ENCODE measurements at regions of chr1 and their contacts with region 1.

Region 1: DNA sequence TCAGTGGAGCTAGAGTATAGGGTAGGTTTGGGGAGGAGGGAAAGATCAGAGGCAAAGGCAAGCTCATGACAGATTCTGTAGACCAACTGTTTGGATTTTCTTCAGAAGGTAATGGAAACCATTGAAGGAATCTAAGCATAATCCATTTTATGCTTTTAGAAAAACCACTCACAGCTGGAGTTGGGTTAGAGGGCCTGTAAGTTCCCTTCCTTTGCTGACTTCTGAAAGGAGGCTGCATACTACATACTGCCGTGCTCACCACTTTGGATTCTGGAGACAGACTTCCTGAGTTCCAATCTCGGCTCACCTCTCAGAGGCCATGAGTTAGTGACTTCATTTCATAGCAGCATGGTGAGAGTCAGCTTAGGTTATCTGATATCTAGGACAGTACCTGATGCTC is 6.4 kb upstream of the SYT2 start:
- DNase-seq: no peak
- H3K27ac ChIP-seq: no peak overlapping the region
- CTCF ChIP-seq: no peak

Region 2: DNA sequence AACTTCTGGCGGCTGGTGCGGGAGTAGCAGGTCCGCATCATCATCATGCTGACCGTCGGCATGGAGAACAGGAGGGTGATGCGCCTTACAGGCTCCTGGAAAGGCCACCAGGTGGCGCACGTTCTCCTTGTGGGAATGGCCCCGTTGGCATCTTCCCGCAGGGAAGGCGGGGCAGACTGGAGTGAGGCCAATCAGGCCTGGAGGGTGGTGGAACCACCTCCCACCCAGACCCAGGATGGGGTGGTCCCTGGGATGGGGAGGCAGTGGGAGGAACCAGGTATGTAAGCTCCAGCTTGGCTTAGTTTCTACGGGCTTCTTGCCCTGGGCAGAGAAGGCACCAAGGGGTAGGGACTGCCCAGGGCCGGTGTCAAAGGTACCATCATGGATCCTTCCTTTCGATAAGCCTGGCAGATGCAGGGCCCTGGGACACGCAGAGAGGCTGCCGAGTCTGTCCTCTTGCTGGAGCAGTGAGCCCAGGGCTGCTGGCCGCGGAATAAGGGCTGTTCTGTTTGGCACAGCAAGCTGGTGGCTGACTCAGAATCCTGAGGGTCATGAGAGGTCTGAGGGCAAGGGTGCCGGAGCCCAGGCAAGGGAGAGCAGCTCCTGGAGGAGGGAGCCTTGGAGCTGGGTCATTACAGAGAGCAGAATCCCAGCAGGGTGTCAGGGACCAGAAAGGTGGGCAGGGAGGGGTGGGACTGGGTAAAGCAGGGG is 531.7 kb before region 1 on chr1:
- CTCF ChIA-PET with region 1: interaction called, 14 read pairs
- POLR2A ChIA-PET with region 1: no interaction called
- DNase-seq: peak; percentile 93
- H3K27ac ChIP-seq: no peak overlapping the region
- CTCF ChIP-seq: peak; percentile 85

Region 3: GRCh38 chr1:202343652-202344349 is 372.9 kb before region 1 on chr1:
- CTCF ChIA-PET with region 1: interaction called, 11 read pairs
- POLR2A ChIA-PET with region 1: interaction called, 3 read pairs
- DNase-seq: peak; percentile 59
- H3K27ac ChIP-seq: no peak overlapping the region
- CTCF ChIP-seq: peak; percentile 84

Region 4: GRCh38 chr1:202704601-202705000 is 12.1 kb before region 1 on chr1:
- CTCF ChIA-PET with region 1: interaction called, 15 read pairs
- POLR2A ChIA-PET with region 1: no interaction called
- DNase-seq: no peak
- H3K27ac ChIP-seq: no peak overlapping the region
- CTCF ChIP-seq: no peak

Region 5: GRCh38 chr1:202728951-202729350 is 12.3 kb after region 1 on chr1:
- CTCF ChIA-PET with region 1: interaction called, 10 read pairs
- POLR2A ChIA-PET with region 1: no interaction called
- DNase-seq: no peak
- H3K27ac ChIP-seq: no peak overlapping the region
- CTCF ChIP-seq: no peak

Region 6: GRCh38 chr1:202835548-202836090 is 119.0 kb after region 1 on chr1:
- CTCF ChIA-PET with region 1: no interaction called
- POLR2A ChIA-PET with region 1: no interaction called
- DNase-seq: no peak
- H3K27ac ChIP-seq: no peak overlapping the region
- CTCF ChIP-seq: no peak

Measured in RWPE1 (cell line).